Activated naive CD4-positive, alpha-beta T cell treated with anti-CD3 and anti-CD28 coated beads, Interleukin-2, amount 10 ng/mL, durations not matched to agents 7 days and 5 days (primary cell): ENCODE measurements at regions of chr14 and their contacts with region 1.

Region 1: GRCh38 chr14:94136575-94137331 is 7.3 kb upstream of the IFI27L2 start:
- DNase-seq: peak; percentile 91
- H3K4me3 Mint-ChIP-seq: no peak overlapping the region
- H3K27ac Mint-ChIP-seq: no peak overlapping the region
- H3K4me1 Mint-ChIP-seq: no peaks in the 10 kb centered on the region
- H3K27me3 Mint-ChIP-seq: peaks cover 43% of the 10 kb centered on the region

Region 2: DNA sequence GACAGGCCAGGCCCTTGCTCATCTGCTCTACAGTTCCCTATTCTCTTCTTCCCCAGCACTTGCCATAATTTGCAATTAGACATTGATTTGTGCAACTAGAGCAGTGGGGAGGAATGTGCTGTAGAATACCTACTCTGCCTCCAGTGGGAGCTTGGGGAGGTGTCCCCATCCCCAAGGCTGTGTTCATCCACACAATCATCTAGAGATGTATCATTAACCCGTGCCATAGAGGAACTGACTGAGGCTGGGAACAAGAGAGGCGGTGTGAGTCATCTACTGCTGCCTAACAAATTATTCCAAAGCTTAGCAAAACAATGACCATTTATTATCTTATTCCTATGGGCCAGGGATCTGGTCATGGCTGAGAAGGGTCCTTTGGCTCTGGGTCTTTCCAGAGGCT is 115.8 kb before region 1 on chr14:
- CTCF ChIA-PET with region 1: interaction called, 11 read pairs
- DNase-seq: no peak
- H3K4me3 Mint-ChIP-seq: no peak overlapping the region
- H3K27ac Mint-ChIP-seq: no peak overlapping the region
- H3K4me1 Mint-ChIP-seq: peaks cover 48% of the 10 kb centered on the region
- H3K27me3 Mint-ChIP-seq: peaks cover 61% of the 10 kb centered on the region

Region 3: GRCh38 chr14:94026173-94026888 is 110.4 kb before region 1 on chr14 and contains the start of gene OTUB2:
- CTCF ChIA-PET with region 1: interaction called, 153 read pairs
- DNase-seq: peak; percentile 98
- H3K4me3 Mint-ChIP-seq: peak within 1 kb of the TSS; percentile 72
- H3K27ac Mint-ChIP-seq: peak within 1 kb of the TSS; percentile 66
- H3K4me1 Mint-ChIP-seq: peaks cover 62% of the 10 kb centered on the region
- H3K27me3 Mint-ChIP-seq: peaks cover 19% of the 10 kb centered on the region

Region 4: GRCh38 chr14:94051115-94051514 is 85.6 kb before region 1 on chr14:
- CTCF ChIA-PET with region 1: interaction called, 50 read pairs
- DNase-seq: no peak
- H3K4me3 Mint-ChIP-seq: no peak overlapping the region
- H3K27ac Mint-ChIP-seq: peak overlapping the region; percentile 25
- H3K4me1 Mint-ChIP-seq: peaks cover 32% of the 10 kb centered on the region
- H3K27me3 Mint-ChIP-seq: no peaks in the 10 kb centered on the region

Region 5: GRCh38 chr14:94158239-94158883 is 21.6 kb after region 1 on chr14:
- CTCF ChIA-PET with region 1: interaction called, 10 read pairs
- DNase-seq: peak; percentile 73
- H3K4me3 Mint-ChIP-seq: peak overlapping the region; percentile 46
- H3K27ac Mint-ChIP-seq: peak overlapping the region; percentile 94
- H3K4me1 Mint-ChIP-seq: peaks cover 66% of the 10 kb centered on the region
- H3K27me3 Mint-ChIP-seq: peaks cover 13% of the 10 kb centered on the region

Region 6: DNA sequence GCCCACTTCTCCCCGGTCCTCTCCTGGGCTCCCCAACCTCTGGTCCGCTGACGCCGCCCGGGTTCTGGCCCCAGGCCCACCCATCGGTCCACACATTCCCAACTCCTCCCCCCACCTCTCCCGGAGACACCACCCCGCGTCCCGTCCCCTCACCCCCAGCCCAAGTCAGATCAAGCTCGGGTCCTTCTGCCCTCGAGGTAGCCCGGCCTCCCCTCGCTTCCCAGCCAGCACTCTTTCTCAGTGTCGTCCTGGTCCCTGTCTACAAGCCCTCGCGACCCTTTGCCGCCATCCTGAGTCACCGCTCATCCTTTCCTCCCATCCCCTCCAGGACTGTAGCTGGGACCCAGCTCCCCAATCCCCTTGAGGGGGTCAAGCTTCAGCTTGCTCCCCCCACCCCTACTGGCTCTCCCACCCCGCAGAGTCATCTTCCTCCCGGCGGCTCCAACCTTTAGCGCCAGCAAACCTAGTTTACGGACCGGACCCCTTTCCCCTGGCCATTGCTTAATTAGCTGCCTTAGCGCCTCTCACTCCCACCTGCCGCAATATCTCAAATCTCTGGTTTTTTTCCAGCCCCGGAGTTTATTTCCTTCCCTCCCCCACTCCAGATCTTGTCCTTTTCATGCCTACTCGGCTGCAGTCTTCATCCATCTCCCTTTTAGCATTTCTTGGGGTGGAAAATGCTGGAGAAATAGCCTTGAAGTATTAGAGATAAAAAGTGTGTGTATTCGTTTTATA is 38.4 kb after region 1 on chr14:
- CTCF ChIA-PET with region 1: interaction called, 116 read pairs
- DNase-seq: no peak
- H3K4me3 Mint-ChIP-seq: peak overlapping the region; percentile 68
- H3K27ac Mint-ChIP-seq: peak overlapping the region; percentile 6
- H3K4me1 Mint-ChIP-seq: peaks cover 25% of the 10 kb centered on the region
- H3K27me3 Mint-ChIP-seq: peaks cover 38% of the 10 kb centered on the region

Region 7: GRCh38 chr14:94180655-94181271 is 44.0 kb after region 1 on chr14:
- CTCF ChIA-PET with region 1: interaction called, 116 read pairs
- DNase-seq: peak; percentile 41
- H3K4me3 Mint-ChIP-seq: peak overlapping the region; percentile 44
- H3K27ac Mint-ChIP-seq: peak overlapping the region; percentile 51
- H3K4me1 Mint-ChIP-seq: peaks cover 18% of the 10 kb centered on the region
- H3K27me3 Mint-ChIP-seq: peaks cover 16% of the 10 kb centered on the region

Region 8: DNA sequence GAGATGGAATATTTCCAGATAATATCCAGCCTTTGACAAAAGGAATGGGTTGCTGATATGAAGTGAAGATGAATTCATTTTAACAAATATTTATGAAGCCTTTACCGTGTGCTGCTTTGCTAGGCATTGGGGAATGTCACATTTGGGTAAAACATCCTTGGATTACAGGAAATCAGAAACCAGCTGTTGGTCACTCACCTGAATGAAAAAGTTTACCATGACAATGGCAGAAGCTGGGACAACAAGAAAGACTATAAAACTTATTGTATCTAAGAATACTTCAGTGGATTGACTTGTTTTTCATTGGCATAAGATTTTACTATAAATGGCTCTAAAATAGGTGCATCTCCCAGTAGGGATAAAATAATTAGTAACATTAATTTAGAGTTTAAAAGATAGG is 57.0 kb after region 1 on chr14:
- CTCF ChIA-PET with region 1: no interaction called
- DNase-seq: no peak
- H3K4me3 Mint-ChIP-seq: no peak overlapping the region
- H3K27ac Mint-ChIP-seq: no peak overlapping the region
- H3K4me1 Mint-ChIP-seq: no peaks in the 10 kb centered on the region
- H3K27me3 Mint-ChIP-seq: peaks cover 11% of the 10 kb centered on the region